GM12878 (cell line): ENCODE measurements at regions of chr1 and their contacts with region 1.

Region 1: DNA sequence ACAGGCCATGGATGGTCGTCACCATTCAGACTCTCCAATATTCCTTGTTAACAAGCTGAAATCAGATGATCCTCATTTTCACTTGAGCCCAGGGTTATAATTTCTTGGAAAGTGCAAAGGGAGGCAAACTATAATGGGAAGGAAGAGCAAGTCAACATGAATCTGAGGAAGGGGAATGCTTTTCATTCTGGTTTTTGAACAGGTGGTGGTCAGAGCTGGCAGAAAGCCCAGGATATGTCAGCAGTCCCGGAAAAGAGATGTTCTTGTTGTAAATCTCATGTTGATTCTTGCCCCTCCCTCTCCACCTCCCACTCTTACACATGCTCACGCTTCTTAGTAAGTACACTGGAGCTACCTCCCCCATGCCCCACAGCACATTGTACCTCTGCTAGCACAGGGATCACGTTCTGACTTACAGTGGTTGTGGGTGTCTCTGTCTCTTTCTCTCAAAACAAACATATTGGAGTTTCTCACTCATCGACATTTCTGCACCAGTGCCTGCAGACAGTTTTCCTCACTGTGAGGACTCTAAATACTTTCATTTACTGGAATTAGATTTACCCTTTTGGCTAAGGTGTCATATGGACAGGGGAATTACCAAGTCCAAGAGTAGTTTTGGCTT is 77.6 kb downstream of the XCL2 start:
- DNase-seq: peak; percentile 88
- ATAC-seq: peak; percentile 89
- H3K4me3 ChIP-seq: peak overlapping the region; percentile 25; the same call in 1 of the 2 replicates
- H3K27ac ChIP-seq: peak overlapping the region; percentile 56
- H3K4me1 ChIP-seq: peaks cover 25% of the 10 kb centered on the region
- H3K27me3 ChIP-seq: no peaks in the 10 kb centered on the region
- CTCF ChIP-seq: no peak
- EP300 ChIP-seq: peak; percentile 23 to 46; a peak in 1 of 4 replicates
- POLR2A ChIP-seq: no peak
- RAD21 ChIP-seq: no peak

Region 2: GRCh38 chr1:168145184-168146159 is 320.7 kb before region 1 on chr1:
- CTCF ChIA-PET with region 1: no interaction called
- POLR2A ChIA-PET with region 1: no interaction called
- RAD21 ChIA-PET with region 1: no interaction called
- SMC1A ChIA-PET with region 1: no interaction called
- in situ Hi-C with region 1: no loop called
- intact Hi-C with region 1: no loop called
- DNase-seq: peak; percentile 52
- ATAC-seq: peak; percentile 99
- H3K4me3 ChIP-seq: no peak overlapping the region
- H3K27ac ChIP-seq: no peak overlapping the region
- H3K4me1 ChIP-seq: no peaks in the 10 kb centered on the region
- H3K27me3 ChIP-seq: no peaks in the 10 kb centered on the region
- CTCF ChIP-seq: peak; percentile 95 to 99 (median 99)
- EP300 ChIP-seq: no peak
- POLR2A ChIP-seq: no peak
- RAD21 ChIP-seq: peak; percentile 59

Region 3: DNA sequence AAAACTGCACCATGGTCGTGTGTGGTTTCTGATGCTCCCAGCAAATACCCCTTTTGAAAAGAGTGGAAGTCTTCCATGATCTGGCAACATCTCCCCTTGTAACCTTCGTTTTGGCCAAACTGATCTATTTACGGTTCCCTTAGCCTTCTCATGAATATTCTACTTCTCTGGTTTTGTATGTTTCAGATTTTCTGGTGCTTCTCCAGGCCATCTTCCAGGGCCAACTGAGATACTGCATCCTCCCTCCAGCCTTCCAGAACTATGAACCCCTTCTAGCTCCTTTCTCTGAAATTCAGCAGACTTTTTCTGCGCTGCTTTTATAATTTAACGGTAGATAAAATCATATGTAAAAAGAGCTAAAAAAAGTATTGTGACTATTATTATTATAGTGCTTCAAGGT is 20.1 kb before region 1 on chr1:
- CTCF ChIA-PET with region 1: interaction called, 23 read pairs
- POLR2A ChIA-PET with region 1: interaction called, 14 read pairs
- RAD21 ChIA-PET with region 1: interaction called, 29 read pairs
- SMC1A ChIA-PET with region 1: interaction called, 114 read pairs
- in situ Hi-C with region 1: no loop called
- intact Hi-C with region 1: no loop called
- DNase-seq: no peak
- ATAC-seq: no peak
- H3K4me3 ChIP-seq: no peak overlapping the region
- H3K27ac ChIP-seq: no peak overlapping the region
- H3K4me1 ChIP-seq: no peaks in the 10 kb centered on the region
- H3K27me3 ChIP-seq: no peaks in the 10 kb centered on the region
- CTCF ChIP-seq: no peak
- EP300 ChIP-seq: no peak
- POLR2A ChIP-seq: no peak
- RAD21 ChIP-seq: no peak

Region 4: DNA sequence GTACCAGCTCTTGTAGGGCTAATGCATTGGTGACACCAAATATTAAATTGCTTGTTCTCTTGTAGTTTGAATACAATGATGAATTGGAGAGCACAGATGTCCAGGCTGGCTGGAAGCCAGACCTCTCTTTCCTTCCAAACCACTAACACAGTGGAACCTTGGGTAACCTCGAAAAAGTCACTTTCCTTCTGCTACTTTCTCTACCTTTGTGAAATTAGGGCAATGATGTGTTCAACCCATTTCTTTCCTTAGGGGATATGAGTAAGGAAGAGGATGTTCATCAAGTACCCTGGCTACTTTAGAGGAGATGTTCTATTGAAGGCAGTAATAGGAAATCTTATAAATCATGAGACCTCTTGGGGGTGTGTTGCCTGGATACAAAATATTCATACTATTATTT is 21.9 kb after region 1 on chr1:
- CTCF ChIA-PET with region 1: interaction called, 6 read pairs
- POLR2A ChIA-PET with region 1: interaction called, 3 read pairs
- RAD21 ChIA-PET with region 1: interaction called, 6 read pairs
- SMC1A ChIA-PET with region 1: interaction called, 87 read pairs
- in situ Hi-C with region 1: no loop called
- intact Hi-C with region 1: no loop called
- DNase-seq: no peak
- ATAC-seq: no peak
- H3K4me3 ChIP-seq: no peak overlapping the region
- H3K27ac ChIP-seq: no peak overlapping the region
- H3K4me1 ChIP-seq: no peaks in the 10 kb centered on the region
- H3K27me3 ChIP-seq: no peaks in the 10 kb centered on the region
- CTCF ChIP-seq: no peak
- EP300 ChIP-seq: no peak
- POLR2A ChIP-seq: no peak
- RAD21 ChIP-seq: no peak

Region 5: GRCh38 chr1:168504064-168504837 is 38.0 kb after region 1 on chr1:
- CTCF ChIA-PET with region 1: interaction called, 25 read pairs
- POLR2A ChIA-PET with region 1: interaction called, 52 read pairs
- RAD21 ChIA-PET with region 1: interaction called, 103 read pairs
- SMC1A ChIA-PET with region 1: interaction called, 125 read pairs
- in situ Hi-C with region 1: no loop called
- intact Hi-C with region 1: loop called (anchors 1 kb)
- DNase-seq: peak; percentile 60
- ATAC-seq: peak; percentile 87
- H3K4me3 ChIP-seq: no peak overlapping the region
- H3K27ac ChIP-seq: no peak overlapping the region
- H3K4me1 ChIP-seq: peaks cover 1% of the 10 kb centered on the region
- H3K27me3 ChIP-seq: no peaks in the 10 kb centered on the region
- CTCF ChIP-seq: no peak
- EP300 ChIP-seq: peak in 1 of 2 experiments; percentile 47; a peak in 1 of 4 replicates
- POLR2A ChIP-seq: no peak
- RAD21 ChIP-seq: no peak

Region 6: DNA sequence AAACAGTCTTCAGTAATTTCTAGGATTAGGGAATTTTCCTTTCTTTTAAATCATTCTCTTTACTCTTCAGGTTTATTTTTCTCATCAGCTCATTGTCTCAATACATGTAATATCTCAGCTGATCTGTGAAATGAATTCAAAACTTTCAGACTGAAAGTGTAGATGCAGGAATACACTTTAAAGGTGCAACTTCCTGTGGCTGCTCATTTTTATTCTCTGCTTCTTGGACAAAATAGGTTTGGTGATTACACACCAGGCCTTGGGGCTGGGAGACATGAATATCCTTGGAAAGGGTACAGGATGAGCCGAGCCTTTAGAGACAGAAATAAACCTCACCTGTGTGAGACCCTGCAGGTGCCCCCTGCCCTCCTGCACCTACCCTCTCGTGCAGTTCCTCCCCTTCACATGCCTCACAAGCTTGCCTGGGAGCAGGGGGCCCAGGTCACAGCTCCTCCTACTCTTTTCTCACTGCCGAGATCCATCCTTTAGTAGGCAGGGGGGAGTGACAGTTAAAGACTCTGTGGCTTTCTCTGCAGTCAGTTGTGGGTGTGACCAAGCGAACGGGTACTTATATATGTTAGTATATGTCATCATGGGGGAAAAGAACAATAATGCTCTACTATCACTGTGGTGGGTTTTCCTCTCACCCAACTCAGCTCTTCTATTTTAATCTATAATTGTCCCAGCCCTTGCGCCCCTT is 54.0 kb after region 1 on chr1:
- CTCF ChIA-PET with region 1: interaction called, 6 read pairs
- POLR2A ChIA-PET with region 1: interaction called, 4 read pairs
- RAD21 ChIA-PET with region 1: interaction called, 24 read pairs
- SMC1A ChIA-PET with region 1: interaction called, 25 read pairs
- in situ Hi-C with region 1: no loop called
- intact Hi-C with region 1: no loop called
- DNase-seq: no peak
- ATAC-seq: peak; percentile 95
- H3K4me3 ChIP-seq: no peak overlapping the region
- H3K27ac ChIP-seq: no peak overlapping the region
- H3K4me1 ChIP-seq: peaks cover 10% of the 10 kb centered on the region
- H3K27me3 ChIP-seq: no peaks in the 10 kb centered on the region; a peak in 1 of 4 replicates
- CTCF ChIP-seq: no peak
- EP300 ChIP-seq: peak; percentile 46 to 74; a peak in 2 of 4 replicates
- POLR2A ChIP-seq: no peak
- RAD21 ChIP-seq: no peak

Region 7: DNA sequence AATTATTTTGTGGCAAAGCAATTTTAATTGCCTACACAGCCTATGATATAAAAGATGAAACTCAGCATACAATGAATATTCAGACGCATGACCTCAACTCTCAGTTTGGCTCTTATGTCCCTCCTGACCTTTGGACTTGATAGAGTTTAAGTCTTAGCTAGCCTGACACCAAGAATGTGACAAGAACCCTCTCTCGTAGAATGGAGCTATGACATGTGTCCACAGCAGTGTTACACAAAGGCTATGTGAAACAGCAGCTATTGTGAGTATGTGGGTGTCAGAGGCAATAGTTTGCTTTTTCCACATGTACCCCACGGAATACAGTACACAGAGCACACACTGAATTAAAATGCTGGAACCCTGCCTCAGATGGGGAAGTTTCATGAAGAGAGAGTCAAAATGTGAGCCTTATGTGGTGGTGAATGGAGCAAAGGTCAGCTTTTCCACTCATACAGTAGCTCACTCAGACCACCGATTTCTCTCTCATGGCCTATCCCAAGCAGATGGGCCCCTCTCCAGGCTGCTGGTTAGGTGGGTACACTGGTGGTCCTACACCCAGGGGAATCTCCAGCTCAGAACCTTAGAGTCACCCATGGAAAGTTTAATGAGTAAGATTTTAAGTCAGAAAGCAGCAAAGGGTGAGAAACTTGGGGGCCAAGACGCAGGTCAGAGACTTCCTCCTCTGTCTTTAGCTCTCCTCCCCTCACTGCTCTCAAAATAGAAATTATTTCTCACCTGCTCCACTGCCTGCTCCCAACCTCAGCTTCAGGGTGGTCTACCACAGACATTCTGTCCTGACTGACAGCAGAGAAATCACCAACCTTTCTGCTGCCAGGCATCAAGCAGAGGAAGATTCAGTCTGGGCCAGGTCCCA is 87.7 kb after region 1 on chr1:
- CTCF ChIA-PET with region 1: interaction called, 8 read pairs
- POLR2A ChIA-PET with region 1: interaction called, 24 read pairs
- RAD21 ChIA-PET with region 1: interaction called, 27 read pairs
- SMC1A ChIA-PET with region 1: interaction called, 62 read pairs
- in situ Hi-C with region 1: no loop called
- intact Hi-C with region 1: loop called (anchors 10 kb)
- DNase-seq: no peak
- ATAC-seq: peak; percentile 70
- H3K4me3 ChIP-seq: no peak overlapping the region
- H3K27ac ChIP-seq: no peak overlapping the region
- H3K4me1 ChIP-seq: no peaks in the 10 kb centered on the region; the same call in 1 of the 2 replicates
- H3K27me3 ChIP-seq: no peaks in the 10 kb centered on the region
- CTCF ChIP-seq: no peak
- EP300 ChIP-seq: peak in 1 of 2 experiments; percentile 13; a peak in 2 of 4 replicates
- POLR2A ChIP-seq: no peak
- RAD21 ChIP-seq: no peak

Region 8: DNA sequence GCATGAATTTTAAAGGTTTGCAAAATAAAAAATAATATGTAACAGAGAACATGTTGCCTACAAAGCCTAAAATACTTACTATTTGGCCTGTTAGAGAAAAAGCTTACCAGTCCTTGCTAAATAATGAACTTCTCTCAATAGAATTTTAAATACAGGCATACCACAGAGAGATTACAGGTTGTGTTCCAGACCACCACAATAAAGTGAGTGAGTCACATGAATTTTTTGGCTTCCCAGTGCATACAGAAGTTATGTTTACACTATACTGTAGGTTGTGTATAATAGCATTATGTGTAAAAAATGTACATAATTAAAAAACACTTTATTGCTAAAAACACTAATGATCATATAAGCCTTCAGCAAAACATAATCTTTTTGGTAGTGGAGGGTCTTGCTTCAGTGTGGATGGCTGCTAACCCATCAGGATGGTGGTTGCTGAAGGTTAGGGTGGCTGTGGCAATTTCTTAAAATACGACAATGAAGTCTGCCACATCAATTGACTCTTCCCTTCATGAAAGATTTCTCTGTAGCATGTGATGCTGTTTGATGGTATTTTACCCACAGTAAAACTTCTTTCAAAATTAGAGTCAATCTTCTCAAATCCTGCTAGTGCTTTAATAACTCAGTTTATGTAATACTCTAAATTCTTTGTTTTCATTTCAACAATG is 1378.9 kb after region 1 on chr1:
- CTCF ChIA-PET with region 1: no interaction called
- POLR2A ChIA-PET with region 1: no interaction called
- RAD21 ChIA-PET with region 1: no interaction called
- SMC1A ChIA-PET with region 1: no interaction called
- in situ Hi-C with region 1: no loop called
- intact Hi-C with region 1: no loop called
- DNase-seq: no peak
- ATAC-seq: no peak
- H3K4me3 ChIP-seq: no peak overlapping the region
- H3K27ac ChIP-seq: no peak overlapping the region
- H3K4me1 ChIP-seq: no peaks in the 10 kb centered on the region
- H3K27me3 ChIP-seq: no peaks in the 10 kb centered on the region
- CTCF ChIP-seq: no peak
- EP300 ChIP-seq: no peak
- POLR2A ChIP-seq: no peak
- RAD21 ChIP-seq: no peak